Caco-2 (cell line): ENCODE measurements at regions of chr2 and their contacts with region 1.

Region 1: GRCh38 chr2:117958186-117958585 is 55.7 kb downstream of the CCDC93 start:
- DNase-seq: peak; percentile 36 to 44
- H3K4me3 ChIP-seq: no peak overlapping the region
- H3K4me3 Mint-ChIP-seq: no peak overlapping the region
- H3K27ac Mint-ChIP-seq: peak overlapping the region; percentile 72
- H3K4me1 ChIP-seq: peaks cover 23% of the 10 kb centered on the region
- H3K4me1 Mint-ChIP-seq: peaks cover 25% of the 10 kb centered on the region
- H3K27me3 ChIP-seq: no peaks in the 10 kb centered on the region
- H3K27me3 Mint-ChIP-seq: no peaks in the 10 kb centered on the region
- CTCF ChIP-seq: no peak

Region 2: GRCh38 chr2:117801826-117802225 is 156.4 kb before region 1 on chr2:
- CTCF ChIA-PET with region 1: no interaction called
- POLR2A ChIA-PET with region 1: no interaction called
- intact Hi-C with region 1: no loop called
- DNase-seq: no peak
- H3K4me3 ChIP-seq: no peak overlapping the region
- H3K4me3 Mint-ChIP-seq: no peak overlapping the region
- H3K27ac Mint-ChIP-seq: no peak overlapping the region
- H3K4me1 ChIP-seq: no peaks in the 10 kb centered on the region
- H3K4me1 Mint-ChIP-seq: no peaks in the 10 kb centered on the region
- H3K27me3 ChIP-seq: no peaks in the 10 kb centered on the region
- H3K27me3 Mint-ChIP-seq: peaks cover 19% of the 10 kb centered on the region
- CTCF ChIP-seq: no peak

Region 3: DNA sequence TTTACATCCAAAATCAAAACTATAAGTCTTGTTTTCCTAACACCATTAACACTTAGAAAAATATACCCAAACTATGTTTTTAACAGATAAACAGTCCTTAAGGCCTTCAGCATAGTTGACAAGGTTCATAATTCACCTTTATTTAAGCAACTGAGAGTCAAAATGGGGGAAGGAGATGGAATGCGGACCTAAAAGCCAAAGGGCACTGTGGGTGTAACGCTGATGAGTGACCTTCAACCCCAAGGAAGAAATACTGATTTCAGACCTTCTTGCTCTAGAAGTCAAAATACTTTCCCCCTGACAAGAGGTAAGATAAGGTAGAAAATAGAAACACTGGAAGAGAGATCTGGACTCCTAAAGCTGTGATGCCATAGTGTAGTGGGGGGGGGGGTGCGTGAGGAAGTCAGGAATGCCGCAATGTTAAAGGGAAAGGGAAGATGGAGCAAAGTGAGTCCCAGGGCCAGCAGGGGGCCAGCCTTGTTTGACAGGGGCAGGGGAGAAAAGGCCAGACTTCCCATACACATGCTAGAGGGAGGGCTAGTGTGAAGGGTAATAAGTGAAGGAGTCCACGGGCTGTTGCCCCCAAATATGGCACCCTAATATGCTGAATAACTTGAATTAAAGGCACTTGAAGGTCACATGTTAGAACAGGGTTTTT is 24.3 kb after region 1 on chr2:
- CTCF ChIA-PET with region 1: no interaction called
- POLR2A ChIA-PET with region 1: no interaction called
- intact Hi-C with region 1: loop called (anchors 1 kb)
- DNase-seq: peak; percentile 14 to 40
- H3K4me3 ChIP-seq: no peak overlapping the region
- H3K4me3 Mint-ChIP-seq: no peak overlapping the region
- H3K27ac Mint-ChIP-seq: no peak overlapping the region
- H3K4me1 ChIP-seq: peaks cover 17% of the 10 kb centered on the region
- H3K4me1 Mint-ChIP-seq: no peaks in the 10 kb centered on the region
- H3K27me3 ChIP-seq: no peaks in the 10 kb centered on the region
- H3K27me3 Mint-ChIP-seq: no peaks in the 10 kb centered on the region
- CTCF ChIP-seq: peak in 1 of 2 experiments; percentile 18